Caco-2 (cell line): ENCODE measurements at regions of chr5 and their contacts with region 1.

Region 1: DNA sequence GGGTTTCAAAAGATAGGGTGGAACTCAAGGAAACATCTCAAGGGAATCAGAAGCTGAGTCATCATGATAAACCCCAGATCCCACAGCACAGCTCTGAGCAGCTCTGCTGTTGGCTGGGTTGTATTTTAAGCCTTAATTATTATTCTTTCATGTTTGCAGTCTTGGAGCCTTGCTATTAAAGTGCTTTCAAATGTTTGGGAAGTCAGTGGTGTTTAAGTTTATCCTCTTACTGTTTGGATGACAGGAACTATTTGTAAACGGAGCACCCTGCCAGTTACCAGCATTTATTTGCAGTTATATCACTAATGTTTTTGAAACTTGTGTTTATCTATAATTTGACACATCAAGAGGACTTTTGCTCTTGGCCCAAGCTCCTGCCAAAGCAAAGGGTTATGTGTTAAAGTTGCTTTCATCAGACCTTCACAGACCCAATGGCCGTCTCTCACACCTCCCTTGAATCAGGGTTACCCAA is 141.1 kb upstream of the SPDL1 start:
- DNase-seq: no peak
- H3K4me3 ChIP-seq: no peak overlapping the region
- H3K4me3 Mint-ChIP-seq: peak overlapping the region; percentile 25
- H3K27ac Mint-ChIP-seq: peak overlapping the region; percentile 23
- H3K4me1 ChIP-seq: peaks cover 62% of the 10 kb centered on the region
- H3K4me1 Mint-ChIP-seq: peaks cover 46% of the 10 kb centered on the region
- H3K27me3 ChIP-seq: no peaks in the 10 kb centered on the region
- H3K27me3 Mint-ChIP-seq: no peaks in the 10 kb centered on the region
- CTCF ChIP-seq: no peak

Region 2: DNA sequence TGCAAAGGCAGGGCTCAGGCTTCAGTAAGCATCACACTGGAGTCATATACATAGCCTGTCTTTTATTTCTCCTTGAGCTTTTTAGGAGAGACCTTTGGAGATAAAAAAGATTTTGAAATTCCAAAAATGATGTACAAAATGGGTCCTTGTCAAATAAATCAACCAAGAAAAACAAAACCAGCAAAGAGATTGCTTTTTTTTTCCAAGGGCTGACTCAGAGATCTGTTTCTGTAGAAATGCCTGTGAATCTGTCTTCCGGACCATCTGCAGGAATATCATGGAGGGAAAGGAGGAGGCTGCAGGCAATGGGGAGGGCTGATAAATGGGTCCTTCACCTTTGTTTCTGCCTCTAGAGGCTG is 218.9 kb before region 1 on chr5:
- CTCF ChIA-PET with region 1: interaction called, 3 read pairs
- POLR2A ChIA-PET with region 1: no interaction called
- intact Hi-C with region 1: loop called (anchors 1 kb)
- DNase-seq: peak; percentile 78 to 87
- H3K4me3 ChIP-seq: no peak overlapping the region
- H3K4me3 Mint-ChIP-seq: peak overlapping the region; percentile 39
- H3K27ac Mint-ChIP-seq: peak overlapping the region; percentile 83
- H3K4me1 ChIP-seq: peaks cover 65% of the 10 kb centered on the region
- H3K4me1 Mint-ChIP-seq: peaks cover 56% of the 10 kb centered on the region
- H3K27me3 ChIP-seq: no peaks in the 10 kb centered on the region
- H3K27me3 Mint-ChIP-seq: no peaks in the 10 kb centered on the region
- CTCF ChIP-seq: no peak

Region 3: DNA sequence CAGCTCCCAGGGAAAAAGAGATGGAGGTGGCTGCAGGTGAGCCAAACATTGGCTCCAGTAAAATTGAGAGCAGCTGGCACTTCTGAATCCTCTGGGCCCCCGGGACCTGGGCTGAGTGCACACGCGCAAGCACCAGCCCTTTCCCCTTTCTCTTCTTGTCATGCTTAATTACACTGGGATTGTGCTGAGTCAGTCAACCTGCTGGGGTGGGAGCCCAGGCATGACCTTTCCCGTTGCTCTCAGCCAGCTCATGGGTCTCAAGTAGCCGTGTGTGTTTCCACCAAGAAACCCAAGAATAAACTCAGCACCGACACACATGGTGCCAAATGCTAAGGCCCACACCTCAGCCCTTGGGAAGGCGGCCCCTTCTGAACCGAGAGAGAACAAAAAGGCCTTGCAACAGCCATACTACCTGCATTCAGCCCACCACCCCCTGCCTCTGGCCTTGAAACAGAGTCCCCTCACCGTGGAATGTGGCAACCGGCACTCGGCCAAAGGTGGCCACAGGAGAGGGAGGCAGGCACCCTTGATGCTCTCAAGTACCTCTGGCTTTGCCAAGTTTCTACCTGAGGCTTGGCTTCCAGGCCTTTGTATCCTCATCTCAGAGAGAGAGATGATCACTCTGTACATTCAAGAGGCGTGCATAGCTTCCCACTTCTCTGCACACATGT is 169.6 kb before region 1 on chr5:
- CTCF ChIA-PET with region 1: interaction called, 3 read pairs
- POLR2A ChIA-PET with region 1: no interaction called
- intact Hi-C with region 1: loop called (anchors 1 kb)
- DNase-seq: no peak
- H3K4me3 ChIP-seq: no peak overlapping the region
- H3K4me3 Mint-ChIP-seq: peak overlapping the region; percentile 61
- H3K27ac Mint-ChIP-seq: peak overlapping the region; percentile 90
- H3K4me1 ChIP-seq: peaks cover 53% of the 10 kb centered on the region
- H3K4me1 Mint-ChIP-seq: peaks cover 62% of the 10 kb centered on the region
- H3K27me3 ChIP-seq: no peaks in the 10 kb centered on the region
- H3K27me3 Mint-ChIP-seq: no peaks in the 10 kb centered on the region
- CTCF ChIP-seq: no peak

Region 4: DNA sequence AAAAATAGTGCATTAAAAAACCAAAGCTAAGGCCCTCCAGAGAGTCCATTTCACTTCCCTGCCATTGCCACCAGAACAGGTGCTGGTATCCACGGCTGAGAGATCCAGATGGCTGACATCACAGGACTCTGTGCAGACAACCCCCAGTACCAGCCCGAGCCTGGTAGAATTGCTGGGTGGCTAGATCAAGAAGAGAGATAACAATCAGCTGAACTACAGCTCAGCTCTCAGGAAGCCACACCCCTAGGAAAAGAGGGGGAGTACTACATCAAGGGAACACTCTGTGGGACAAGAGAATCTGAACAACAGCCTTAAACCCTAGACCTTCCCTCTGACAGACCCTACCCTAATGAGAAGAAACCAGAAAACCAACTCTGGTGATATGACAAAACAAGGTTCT is 67.7 kb before region 1 on chr5:
- CTCF ChIA-PET with region 1: no interaction called
- POLR2A ChIA-PET with region 1: no interaction called
- intact Hi-C with region 1: loop called (anchors 5 kb)
- DNase-seq: no peak
- H3K4me3 ChIP-seq: no peak overlapping the region
- H3K4me3 Mint-ChIP-seq: no peak overlapping the region
- H3K27ac Mint-ChIP-seq: no peak overlapping the region
- H3K4me1 ChIP-seq: no peaks in the 10 kb centered on the region
- H3K4me1 Mint-ChIP-seq: peaks cover 7% of the 10 kb centered on the region
- H3K27me3 ChIP-seq: no peaks in the 10 kb centered on the region
- H3K27me3 Mint-ChIP-seq: no peaks in the 10 kb centered on the region
- CTCF ChIP-seq: no peak

Region 5: DNA sequence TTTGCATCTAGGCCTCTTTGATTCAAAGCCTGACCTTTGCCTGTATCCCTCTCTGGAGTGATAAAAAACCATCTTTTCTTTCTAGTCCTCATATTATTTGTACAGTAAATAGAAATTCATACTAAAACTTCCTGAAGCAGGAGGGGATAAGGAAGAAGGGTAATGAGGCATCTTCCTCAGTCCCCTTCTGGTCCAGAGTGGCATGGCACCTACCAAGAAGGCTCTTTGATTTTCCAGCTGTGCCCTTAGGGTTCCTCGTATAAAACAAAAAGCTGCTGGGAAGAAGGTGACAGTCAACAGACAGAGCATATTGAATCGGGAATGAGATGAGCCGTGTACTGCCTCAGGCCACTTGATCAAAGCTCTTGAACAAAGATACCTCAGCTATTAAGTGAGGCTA is 69.3 kb after region 1 on chr5:
- CTCF ChIA-PET with region 1: no interaction called
- POLR2A ChIA-PET with region 1: no interaction called
- intact Hi-C with region 1: loop called (anchors 5 kb)
- DNase-seq: no peak
- H3K4me3 ChIP-seq: no peak overlapping the region
- H3K4me3 Mint-ChIP-seq: no peak overlapping the region
- H3K27ac Mint-ChIP-seq: no peak overlapping the region
- H3K4me1 ChIP-seq: peaks cover 15% of the 10 kb centered on the region; the same call in 1 of the 2 replicates
- H3K4me1 Mint-ChIP-seq: peaks cover 7% of the 10 kb centered on the region
- H3K27me3 ChIP-seq: no peaks in the 10 kb centered on the region
- H3K27me3 Mint-ChIP-seq: no peaks in the 10 kb centered on the region
- CTCF ChIP-seq: peak; percentile 4 to 32